Activated B cell treated with CpG ODN at 0.5 μM for 24 hours (primary cell): ENCODE measurements at regions of chr19 and their contacts with region 1.

Region 1: DNA sequence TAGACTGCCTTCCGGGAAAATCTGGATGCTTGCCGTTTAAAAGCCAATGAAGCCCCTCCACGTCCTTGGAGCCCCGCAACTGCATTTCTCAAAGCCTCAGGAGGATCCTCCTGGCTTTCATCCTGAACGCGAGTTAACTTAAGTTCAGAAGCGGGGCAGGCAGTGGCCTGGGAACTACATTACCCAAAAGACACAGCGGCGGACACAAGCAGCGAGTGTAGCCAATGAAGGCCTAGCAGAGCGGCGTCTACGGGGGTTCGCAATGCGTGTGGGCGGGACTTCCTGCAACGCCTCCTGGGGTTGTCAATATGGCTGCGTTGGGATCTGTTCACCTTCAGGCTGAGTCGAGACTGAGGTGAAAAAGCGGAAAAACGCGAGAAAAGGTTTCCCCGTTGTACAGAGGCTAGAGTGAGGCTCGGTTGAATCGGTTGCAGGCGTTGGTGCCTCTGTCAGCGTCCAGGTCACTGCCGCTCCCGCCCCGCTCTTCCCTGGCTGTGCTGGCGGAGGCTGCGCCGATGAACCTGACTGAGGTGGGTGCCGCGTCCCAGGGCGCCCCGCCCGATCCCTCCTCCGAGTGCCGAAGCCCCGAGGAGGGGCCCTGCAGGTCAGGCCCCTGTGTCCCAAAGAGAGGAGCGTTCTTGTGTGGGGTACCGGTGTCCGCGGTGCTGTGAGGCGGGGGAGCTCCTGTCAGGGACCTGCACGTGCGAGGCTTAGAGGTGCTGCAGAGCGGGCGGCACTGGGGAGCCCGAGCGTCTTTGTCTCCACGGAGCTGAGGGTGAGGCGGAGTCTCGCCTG is at the start of gene ZNF17:
- DNase-seq: peak; percentile 79
- ATAC-seq: peak; percentile 100
- H3K4me3 Mint-ChIP-seq: peak within 1 kb of the TSS; percentile 94
- H3K27ac Mint-ChIP-seq: peak within 1 kb of the TSS; percentile 85
- H3K4me1 Mint-ChIP-seq: peaks cover 24% of the 10 kb centered on the region
- H3K27me3 Mint-ChIP-seq: no peaks in the 10 kb centered on the region
- CTCF ChIP-seq: no peak
- total RNA-seq, gene ZNF17: 16.1 and 18.6 TPM in 2 replicates

Region 2: DNA sequence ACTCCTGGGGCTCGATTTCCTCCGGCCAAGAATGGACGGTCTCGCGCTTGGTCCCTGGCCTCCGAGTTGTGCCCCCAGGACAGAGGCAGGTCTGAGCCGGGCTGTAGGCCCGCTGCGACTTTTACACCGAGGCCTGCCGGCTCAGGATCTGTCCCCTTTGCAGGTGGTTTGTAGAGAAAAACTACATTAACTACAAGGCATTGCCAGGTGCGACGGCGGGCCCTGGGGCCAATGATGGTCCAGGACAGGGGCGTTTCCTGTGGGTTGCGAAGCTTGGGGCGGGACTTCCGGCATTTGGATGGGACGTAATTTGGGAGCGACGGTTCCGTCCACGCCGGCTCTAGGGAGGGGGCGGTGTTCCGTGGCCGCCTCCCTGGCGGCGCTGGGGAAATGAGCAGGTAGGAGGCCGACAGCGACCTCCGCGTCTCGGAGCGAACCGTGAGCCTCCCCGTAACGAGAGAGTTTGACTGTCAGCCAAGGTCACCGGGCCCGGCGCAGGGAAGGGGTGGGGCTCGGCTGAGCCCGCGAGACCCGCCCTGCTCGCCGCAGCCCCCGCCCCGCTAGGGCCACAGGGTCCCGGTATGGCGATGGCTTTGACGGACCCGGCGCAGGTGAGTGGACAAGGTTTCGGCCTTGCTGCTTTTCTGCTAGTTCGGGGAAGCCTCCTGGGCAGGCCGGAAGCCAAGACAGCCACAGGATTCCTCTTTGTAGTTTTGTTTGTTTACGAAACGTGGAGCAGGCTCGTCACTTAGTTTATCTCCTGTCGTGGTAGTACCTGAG is 170.6 kb before region 1 on chr19 and contains the start of gene ZNF805:
- CTCF ChIA-PET with region 1: no interaction called
- POLR2A ChIA-PET with region 1: no interaction called
- intact Hi-C with region 1: loop called (anchors 10 kb)
- DNase-seq: peak; percentile 90
- ATAC-seq: peak; percentile 93
- H3K4me3 Mint-ChIP-seq: peak within 1 kb of the TSS; percentile 95
- H3K27ac Mint-ChIP-seq: peak within 1 kb of the TSS; percentile 93
- H3K4me1 Mint-ChIP-seq: peaks cover 39% of the 10 kb centered on the region
- H3K27me3 Mint-ChIP-seq: no peaks in the 10 kb centered on the region
- CTCF ChIP-seq: no peak
- total RNA-seq, gene ZNF805: 20.3 and 25.9 TPM in 2 replicates

Region 3: DNA sequence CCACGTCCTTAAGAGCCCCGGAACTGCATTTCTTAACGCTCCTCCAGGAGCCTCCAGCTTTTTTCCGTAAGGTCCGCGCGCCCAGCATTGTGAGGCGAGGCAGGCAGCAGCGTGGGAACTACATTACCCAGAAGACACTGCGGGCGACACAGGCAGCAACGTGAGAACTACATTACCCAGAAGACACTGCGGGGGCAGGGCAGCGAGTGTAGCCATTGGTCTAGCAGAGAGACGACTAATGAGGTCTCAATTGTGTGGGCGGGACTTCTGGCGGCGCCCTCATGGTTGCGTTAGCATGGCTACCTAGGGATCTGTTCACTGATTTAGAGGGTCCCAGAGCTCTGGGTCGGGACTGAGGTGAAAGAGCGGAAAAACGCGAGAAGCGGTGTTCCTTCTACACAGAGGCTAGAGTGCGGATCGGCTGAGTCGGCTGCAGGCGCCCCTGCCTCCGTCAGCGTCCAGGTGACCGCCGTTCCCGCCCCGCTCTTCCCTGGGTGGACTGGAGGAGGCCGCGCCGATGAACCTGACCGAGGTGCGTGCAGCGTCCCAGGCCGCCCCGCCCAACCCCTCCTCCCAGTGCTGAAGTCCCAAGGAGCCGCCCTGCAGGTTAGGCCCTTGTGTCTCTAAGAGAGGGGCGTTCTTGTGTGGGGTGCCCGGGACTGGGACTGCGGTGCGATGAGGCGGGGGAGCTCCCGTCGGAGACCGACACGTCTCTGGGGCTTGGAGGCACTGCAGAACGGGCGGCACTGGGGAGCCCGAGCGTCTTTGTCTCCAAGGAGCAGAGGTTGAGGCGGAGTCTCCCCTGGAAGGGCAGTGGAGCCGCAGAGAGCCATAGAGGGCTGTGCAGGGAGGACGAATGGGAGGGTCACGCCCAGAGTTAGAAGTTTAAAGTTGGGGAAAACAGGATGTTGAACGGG is 24.2 kb after region 1 on chr19 and contains the start of gene ZNF749:
- CTCF ChIA-PET with region 1: no interaction called
- POLR2A ChIA-PET with region 1: no interaction called
- intact Hi-C with region 1: loop called (anchors 1 kb)
- DNase-seq: peak; percentile 84
- ATAC-seq: peak; percentile 99
- H3K4me3 Mint-ChIP-seq: peak within 1 kb of the TSS; percentile 97
- H3K27ac Mint-ChIP-seq: peak within 1 kb of the TSS; percentile 84
- H3K4me1 Mint-ChIP-seq: peaks cover 25% of the 10 kb centered on the region
- H3K27me3 Mint-ChIP-seq: no peaks in the 10 kb centered on the region
- CTCF ChIP-seq: no peak
- total RNA-seq, gene ZNF749: 16.4 and 18.2 TPM in 2 replicates

Region 4: GRCh38 chr19:57578487-57579205 is 167.6 kb after region 1 on chr19 and contains the start of gene ZNF416:
- CTCF ChIA-PET with region 1: no interaction called
- POLR2A ChIA-PET with region 1: no interaction called
- intact Hi-C with region 1: loop called (anchors 1 kb)
- DNase-seq: peak; percentile 79
- ATAC-seq: peak; percentile 92
- H3K4me3 Mint-ChIP-seq: peak within 1 kb of the TSS; percentile 86
- H3K27ac Mint-ChIP-seq: peak within 1 kb of the TSS; percentile 84
- H3K4me1 Mint-ChIP-seq: peaks cover 32% of the 10 kb centered on the region
- H3K27me3 Mint-ChIP-seq: no peaks in the 10 kb centered on the region
- CTCF ChIP-seq: no peak
- total RNA-seq, gene ZNF416: 12.6 and 13.8 TPM in 2 replicates

Region 5: GRCh38 chr19:57903618-57904184 is 492.6 kb after region 1 on chr19:
- CTCF ChIA-PET with region 1: no interaction called
- POLR2A ChIA-PET with region 1: no interaction called
- intact Hi-C with region 1: loop called (anchors 5 kb)
- DNase-seq: no peak
- ATAC-seq: no peak
- H3K4me3 Mint-ChIP-seq: no peak overlapping the region
- H3K27ac Mint-ChIP-seq: peak overlapping the region; percentile 3
- H3K4me1 Mint-ChIP-seq: peaks cover 18% of the 10 kb centered on the region
- H3K27me3 Mint-ChIP-seq: no peaks in the 10 kb centered on the region
- CTCF ChIP-seq: no peak

Region 6: DNA sequence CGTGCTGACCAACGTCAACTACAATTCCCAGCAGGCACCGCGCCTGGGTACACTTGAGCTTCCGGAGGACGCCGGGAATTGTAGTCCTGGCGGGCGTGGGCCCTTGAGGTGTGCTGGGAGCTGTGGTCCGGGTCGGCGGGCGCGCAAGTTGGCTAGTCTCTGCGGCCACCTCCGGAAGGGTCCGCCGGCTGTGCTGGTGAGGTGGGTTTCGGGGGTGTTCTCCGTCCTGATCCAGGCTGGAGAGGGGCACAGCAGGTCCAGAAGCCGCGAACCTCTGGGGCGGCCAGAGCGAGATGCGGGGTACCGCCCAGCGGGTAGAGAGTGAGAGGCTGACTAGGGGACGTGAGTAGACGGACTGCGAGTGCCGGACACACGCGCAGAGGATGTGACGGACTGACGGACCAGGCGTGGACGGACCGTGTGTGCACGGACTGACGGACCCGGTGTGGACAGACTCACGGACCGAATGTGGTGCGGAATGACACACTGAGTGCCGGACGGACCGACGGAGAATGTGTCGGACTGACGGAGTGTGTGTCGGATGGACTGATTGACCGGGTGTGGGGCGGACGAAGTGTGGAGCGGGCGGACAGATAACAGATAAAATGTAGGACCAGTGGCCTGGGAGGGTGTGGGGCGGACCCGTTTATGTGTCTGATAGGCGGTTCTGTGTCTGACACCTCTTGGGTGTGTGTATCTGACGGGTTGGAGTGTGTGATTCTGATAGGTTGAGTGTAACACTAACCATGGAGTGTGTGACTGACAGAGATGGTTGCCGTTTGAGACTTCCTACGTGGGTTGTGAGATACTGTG is 916.0 kb after region 1 on chr19 and contains the start of gene ZSCAN22:
- CTCF ChIA-PET with region 1: no interaction called
- POLR2A ChIA-PET with region 1: no interaction called
- intact Hi-C with region 1: loop called (anchors 2 kb)
- DNase-seq: peak; percentile 82
- ATAC-seq: peak; percentile 88
- H3K4me3 Mint-ChIP-seq: no peak within 1 kb of the TSS
- H3K27ac Mint-ChIP-seq: no peak within 1 kb of the TSS
- H3K4me1 Mint-ChIP-seq: peaks cover 2% of the 10 kb centered on the region
- H3K27me3 Mint-ChIP-seq: no peaks in the 10 kb centered on the region
- CTCF ChIP-seq: no peak
- total RNA-seq, gene ZSCAN22: 4.7 and 4.8 TPM in 2 replicates